Breast epithelium (tissue), 4 donors: ENCODE measurements at regions of chr4 and their contacts with region 1.

Region 1: GRCh38 chr4:127732613-127733328 is 2.6 kb downstream of the SLC25A31 start:
- DNase-seq: no peak
- H3K4me3 ChIP-seq: no peak overlapping the region
- H3K27ac ChIP-seq: no peak overlapping the region
- H3K4me1 ChIP-seq: no peaks in the 10 kb centered on the region
- H3K27me3 ChIP-seq: no peaks in the 10 kb centered on the region
- CTCF ChIP-seq: peak in 2 of 3 donors; percentile 36 to 64
- POLR2A ChIP-seq: no peak

Region 2: GRCh38 chr4:128366212-128366611 is 633.4 kb after region 1 on chr4:
- intact Hi-C with region 1: loop called (anchors 5 kb)
- DNase-seq: no peak
- H3K4me3 ChIP-seq: no peak overlapping the region
- H3K27ac ChIP-seq: no peak overlapping the region
- H3K4me1 ChIP-seq: no peaks in the 10 kb centered on the region
- H3K27me3 ChIP-seq: no peaks in the 10 kb centered on the region
- CTCF ChIP-seq: no peak
- POLR2A ChIP-seq: no peak